ENCODE measurements at regions of chr6 and their contacts with region 1.

Region 1: DNA sequence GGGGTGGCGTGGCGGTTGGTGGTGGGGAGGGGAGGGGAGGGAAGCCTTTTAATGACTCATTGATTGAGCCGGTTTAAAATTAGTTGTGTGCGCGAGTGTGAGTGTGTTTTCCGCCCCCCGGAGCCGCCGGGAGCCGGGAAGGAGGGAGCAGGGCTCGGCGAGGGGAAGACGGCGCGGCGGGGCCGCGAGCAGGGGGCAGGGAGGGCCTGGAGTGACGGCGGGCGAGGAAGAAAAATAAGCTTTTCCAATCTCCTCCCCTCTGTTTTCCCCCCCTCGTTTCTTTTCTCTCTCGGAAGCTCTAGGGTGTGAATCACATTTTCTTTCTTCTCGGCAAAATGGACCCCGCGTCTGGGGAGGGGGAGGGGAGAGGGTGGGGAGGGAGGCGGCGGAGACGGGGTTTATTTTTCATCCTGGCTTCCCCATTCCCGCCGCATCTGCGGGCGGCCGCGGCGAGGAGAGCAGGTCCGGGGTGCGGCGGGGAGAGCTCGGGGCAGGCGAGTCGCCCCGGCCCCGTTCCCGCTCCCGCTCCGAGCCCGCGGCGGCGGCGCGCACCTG is 847 bp downstream of the BICRAL start:
- DNase-seq: peak; percentile 82 to 87 (median 82)
- H3K4me3 ChIP-seq: peak overlapping the region; percentile 80 to 88
- H3K4me3 Mint-ChIP-seq: peak overlapping the region; percentile 95 to 100 (median 99)
- H3K27ac ChIP-seq: peak overlapping the region; percentile 100
- H3K27ac Mint-ChIP-seq: peak overlapping the region in 6 of 7 donors; percentile 100
- H3K4me1 ChIP-seq: peaks cover 68% of the 10 kb centered on the region
- H3K4me1 Mint-ChIP-seq: peaks cover 20 to 46% (median 28%) of the 10 kb centered on the region in 4 donors
- H3K27me3 ChIP-seq: no peaks in the 10 kb centered on the region
- H3K27me3 Mint-ChIP-seq: peaks cover 0 to 1% of the 10 kb centered on the region in 2 donors

Region 2: GRCh38 chr6:42726485-42727086 is 56.1 kb before region 1 on chr6:
- CTCF ChIA-PET with region 1: interaction called, 5 read pairs
- POLR2A ChIA-PET with region 1: interaction called, 91 read pairs
- intact Hi-C with region 1: loop called (anchors 1 kb)
- DNase-seq: peak; percentile 79 to 89 (median 81)
- H3K4me3 ChIP-seq: peak overlapping the region; percentile 53 to 55
- H3K4me3 Mint-ChIP-seq: peak overlapping the region; percentile 83 to 98 (median 92)
- H3K27ac ChIP-seq: peak overlapping the region; percentile 69
- H3K27ac Mint-ChIP-seq: peak overlapping the region; percentile 86 to 99 (median 98)
- H3K4me1 ChIP-seq: peaks cover 16% of the 10 kb centered on the region
- H3K4me1 Mint-ChIP-seq: peaks cover 11 to 24% (median 18%) of the 10 kb centered on the region in 4 donors
- H3K27me3 ChIP-seq: no peaks in the 10 kb centered on the region
- H3K27me3 Mint-ChIP-seq: no peaks in the 10 kb centered on the region

Region 3: GRCh38 chr6:42766141-42766670 is 16.5 kb before region 1 on chr6:
- CTCF ChIA-PET with region 1: interaction called, 11 read pairs
- POLR2A ChIA-PET with region 1: interaction called, 802 read pairs
- intact Hi-C with region 1: loop called (anchors 1 kb)
- DNase-seq: no peak
- H3K4me3 ChIP-seq: no peak overlapping the region
- H3K4me3 Mint-ChIP-seq: no peak overlapping the region
- H3K27ac ChIP-seq: no peak overlapping the region
- H3K27ac Mint-ChIP-seq: peak overlapping the region in 2 of 7 donors; percentile 18 to 60
- H3K4me1 ChIP-seq: peaks cover 34% of the 10 kb centered on the region
- H3K4me1 Mint-ChIP-seq: peaks cover 26 to 46% (median 37%) of the 10 kb centered on the region in 4 donors
- H3K27me3 ChIP-seq: no peaks in the 10 kb centered on the region
- H3K27me3 Mint-ChIP-seq: no peaks in the 10 kb centered on the region

Region 4: DNA sequence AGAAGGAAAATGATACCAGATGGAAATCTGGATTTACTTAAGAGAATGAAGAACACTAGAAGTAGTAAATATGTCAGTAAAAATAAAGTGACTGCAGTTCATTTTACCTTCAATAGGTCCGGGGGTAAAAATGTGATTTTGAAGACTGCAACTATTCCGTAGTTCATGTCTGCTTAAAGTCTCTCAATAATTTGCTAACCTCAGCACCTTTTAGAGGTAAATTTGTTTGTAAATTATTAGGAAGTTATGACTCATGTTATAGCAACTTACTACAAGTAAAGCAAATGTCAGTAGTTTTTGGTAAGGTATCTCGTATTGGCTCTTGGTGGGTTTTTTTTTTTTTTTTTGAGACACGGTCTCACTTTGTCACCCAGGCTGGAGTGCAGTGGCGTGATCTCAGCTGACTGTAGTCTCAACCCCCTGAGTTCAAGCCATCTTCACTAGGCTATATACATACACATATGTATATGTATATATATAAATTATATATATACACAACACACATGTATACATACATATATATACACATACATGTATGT is 31.3 kb after region 1 on chr6:
- CTCF ChIA-PET with region 1: no interaction called
- POLR2A ChIA-PET with region 1: interaction called, 30 read pairs
- intact Hi-C with region 1: no loop called
- DNase-seq: no peak
- H3K4me3 ChIP-seq: no peak overlapping the region
- H3K4me3 Mint-ChIP-seq: peak overlapping the region in 1 of 8 donors; percentile 40
- H3K27ac ChIP-seq: no peak overlapping the region
- H3K27ac Mint-ChIP-seq: peak overlapping the region in 5 of 7 donors; percentile 47 to 78 (median 65)
- H3K4me1 ChIP-seq: peaks cover 3% of the 10 kb centered on the region
- H3K4me1 Mint-ChIP-seq: peaks cover 10 to 19% (median 14%) of the 10 kb centered on the region in 4 donors
- H3K27me3 ChIP-seq: no peaks in the 10 kb centered on the region
- H3K27me3 Mint-ChIP-seq: no peaks in the 10 kb centered on the region

Region 5: GRCh38 chr6:42879372-42880239 is 96.9 kb after region 1 on chr6 and contains the start of gene RPL7L1:
- CTCF ChIA-PET with region 1: no interaction called
- POLR2A ChIA-PET with region 1: interaction called, 101 read pairs
- intact Hi-C with region 1: no loop called
- DNase-seq: peak; percentile 88 to 93 (median 91)
- H3K4me3 ChIP-seq: peak within 1 kb of the TSS; percentile 77 to 84
- H3K4me3 Mint-ChIP-seq: peak within 1 kb of the TSS; percentile 94 to 99 (median 96)
- H3K27ac ChIP-seq: peak within 1 kb of the TSS; percentile 93
- H3K27ac Mint-ChIP-seq: peak within 1 kb of the TSS; percentile 97 to 100 (median 99)
- H3K4me1 ChIP-seq: peaks cover 23% of the 10 kb centered on the region
- H3K4me1 Mint-ChIP-seq: peaks cover 7 to 39% (median 25%) of the 10 kb centered on the region in 4 donors
- H3K27me3 ChIP-seq: no peaks in the 10 kb centered on the region
- H3K27me3 Mint-ChIP-seq: no peaks in the 10 kb centered on the region
- total RNA-seq, gene RPL7L1: 89.2 to 89.8 TPM

Measured in CD4-positive, alpha-beta memory T cell (primary cell).